ENCODE measurements at regions of chr10 and their contacts with region 1.

Region 1: DNA sequence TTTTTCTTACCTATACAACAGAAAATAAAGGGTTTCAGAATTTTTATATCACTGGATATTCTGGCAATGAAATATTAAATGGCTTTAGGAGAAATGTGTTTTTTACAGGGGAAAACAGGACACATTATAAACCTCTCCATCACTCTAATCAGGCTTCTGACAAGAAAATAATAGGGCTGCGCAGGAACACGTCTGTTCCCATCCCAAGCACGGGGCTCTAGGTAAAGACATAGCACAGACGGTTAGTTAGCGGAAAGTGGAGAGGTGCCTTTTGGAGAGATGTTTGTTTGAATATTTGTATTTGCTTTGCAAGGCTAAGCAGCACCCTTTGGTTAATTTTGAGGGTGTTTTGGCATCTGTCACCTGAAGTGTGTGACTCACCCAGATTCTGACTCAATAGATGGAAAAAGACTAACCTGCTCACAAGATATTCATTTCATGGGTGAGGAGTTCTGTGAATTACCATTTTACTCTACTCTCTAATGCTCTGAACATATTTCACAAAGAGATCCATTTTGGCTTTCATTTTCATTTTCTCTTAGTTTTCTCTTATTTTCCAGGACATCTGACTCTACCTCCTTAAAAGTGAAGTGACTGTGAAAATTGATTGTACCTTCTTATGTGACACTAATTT is 174.5 kb upstream of the AKR1E2 start:
- DNase-seq: no peak
- H3K4me3 Mint-ChIP-seq: peak overlapping the region; percentile 8
- H3K27ac Mint-ChIP-seq: peak overlapping the region; percentile 85
- H3K4me1 Mint-ChIP-seq: peaks cover 32% of the 10 kb centered on the region
- H3K27me3 Mint-ChIP-seq: peaks cover 3% of the 10 kb centered on the region

Region 2: GRCh38 chr10:4344511-4344994 is 307.0 kb before region 1 on chr10:
- intact Hi-C with region 1: loop called (anchors 2 kb)
- DNase-seq: no peak
- H3K4me3 Mint-ChIP-seq: no peak overlapping the region
- H3K27ac Mint-ChIP-seq: peak overlapping the region; percentile 6
- H3K4me1 Mint-ChIP-seq: peaks cover 15% of the 10 kb centered on the region
- H3K27me3 Mint-ChIP-seq: peaks cover 4% of the 10 kb centered on the region

Region 3: GRCh38 chr10:4546500-4546899 is 105.0 kb before region 1 on chr10:
- intact Hi-C with region 1: loop called (anchors 1 kb)
- DNase-seq: no peak
- H3K4me3 Mint-ChIP-seq: no peak overlapping the region
- H3K27ac Mint-ChIP-seq: no peak overlapping the region
- H3K4me1 Mint-ChIP-seq: peaks cover 12% of the 10 kb centered on the region
- H3K27me3 Mint-ChIP-seq: peaks cover 14% of the 10 kb centered on the region

Region 4: GRCh38 chr10:4704034-4704545 is 52.6 kb after region 1 on chr10:
- intact Hi-C with region 1: no loop called
- DNase-seq: no peak
- H3K4me3 Mint-ChIP-seq: no peak overlapping the region
- H3K27ac Mint-ChIP-seq: no peak overlapping the region
- H3K4me1 Mint-ChIP-seq: no peaks in the 10 kb centered on the region
- H3K27me3 Mint-ChIP-seq: peaks cover 9% of the 10 kb centered on the region